ENCODE measurements at regions of chr15 and their contacts with region 1.

Region 1: GRCh38 chr15:29668120-29668602 is 154.1 kb downstream of the TJP1 start:
- DNase-seq: peak; percentile 18 to 85 (median 72)
- H3K4me3 ChIP-seq: no peak overlapping the region
- H3K27ac ChIP-seq: no peak overlapping the region
- H3K27me3 ChIP-seq: no peaks in the 10 kb centered on the region
- CTCF ChIP-seq: peak; percentile 74 to 99 (median 92)

Region 2: DNA sequence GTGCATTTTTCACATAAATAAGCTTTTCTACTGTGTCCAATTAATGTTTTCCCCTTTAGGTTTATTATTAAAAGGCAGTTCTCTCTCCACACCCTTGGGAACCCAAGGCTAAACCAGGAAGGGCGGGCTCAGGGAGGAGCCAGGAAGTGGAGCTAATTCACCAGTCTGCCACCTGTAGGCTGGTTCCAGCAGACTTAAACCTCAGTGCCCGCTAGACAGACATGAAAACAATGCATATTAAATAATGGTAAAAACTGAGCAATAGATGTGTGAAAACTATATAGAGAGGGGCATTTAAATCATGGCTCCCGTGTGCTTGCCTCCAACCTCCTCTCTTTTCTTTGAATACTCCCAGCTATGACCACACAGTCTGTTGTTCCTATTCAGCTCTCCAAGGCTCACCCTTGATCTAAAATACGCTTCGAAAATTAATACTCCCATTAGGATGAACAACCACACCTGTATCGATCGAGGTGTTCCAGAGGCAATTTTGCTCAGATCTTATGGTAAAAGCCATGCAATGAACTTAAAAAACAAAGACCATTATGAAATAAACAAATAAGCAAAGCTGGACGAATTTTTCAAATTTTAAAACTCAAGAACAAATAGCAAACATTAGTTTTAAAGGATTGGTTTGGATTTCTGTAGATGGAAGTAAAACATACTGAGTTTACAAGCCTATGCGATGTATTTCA is 99.2 kb before region 1 on chr15:
- intact Hi-C with region 1: loop called in 1 of 2 experiments (anchors 10 kb)
- DNase-seq: peak in 3 of 10 donors; percentile 14 to 54 (median 15)
- H3K4me3 ChIP-seq: peak overlapping the region in 52 of 59 donors; percentile 33 to 78 (median 66)
- H3K27ac ChIP-seq: no peak overlapping the region
- H3K27me3 ChIP-seq: peaks cover 0 to 5% (median 0%) of the 10 kb centered on the region in 45 donors
- CTCF ChIP-seq: peak in 16 of 56 donors; percentile 9 to 32 (median 20)

Region 3: GRCh38 chr15:29935276-29936020 is 267.3 kb after region 1 on chr15:
- intact Hi-C with region 1: loop called in 1 of 2 experiments (anchors 5 kb)
- DNase-seq: no peak
- H3K4me3 ChIP-seq: no peak overlapping the region
- H3K27ac ChIP-seq: peak overlapping the region in 44 of 59 donors; percentile 2 to 92 (median 56)
- H3K27me3 ChIP-seq: no peaks in the 10 kb centered on the region
- CTCF ChIP-seq: peak in 41 of 56 donors; percentile 8 to 64 (median 35)

Region 4: DNA sequence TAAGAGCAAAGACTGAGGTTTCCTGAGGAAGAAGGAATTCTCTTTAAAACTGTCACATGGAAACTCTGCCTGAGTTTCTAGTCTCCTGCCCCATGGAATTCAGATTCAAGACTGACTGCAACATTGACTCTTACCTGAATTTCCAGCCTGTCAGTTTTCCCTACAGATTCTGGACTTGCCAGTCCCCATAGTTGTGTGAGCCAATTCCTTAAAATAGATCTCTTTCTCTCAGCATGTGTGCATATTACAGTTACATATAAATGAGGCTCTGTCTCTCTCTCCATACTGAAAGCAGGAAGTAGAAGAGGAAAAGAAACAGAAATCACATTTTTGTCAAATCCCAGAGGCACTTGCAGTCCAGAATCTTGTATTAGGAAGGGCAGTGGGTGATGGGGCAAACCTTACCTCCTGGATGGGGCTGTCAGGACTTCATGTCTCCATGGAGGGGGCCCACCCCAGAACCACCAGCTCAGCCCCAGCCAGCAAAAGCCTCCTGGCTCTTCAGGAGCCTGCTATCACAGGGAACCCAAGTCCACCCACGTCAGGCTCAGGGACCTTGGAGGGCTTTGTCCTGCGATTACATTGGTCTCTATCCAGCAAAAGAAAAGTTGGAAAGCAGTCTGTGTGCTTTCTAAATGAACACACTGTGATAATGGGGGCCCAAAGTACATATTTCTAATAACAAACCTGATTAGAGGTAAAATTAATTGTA is 395.8 kb after region 1 on chr15:
- intact Hi-C with region 1: loop called in 1 of 2 experiments (anchors 5 kb)
- DNase-seq: no peak
- H3K4me3 ChIP-seq: no peak overlapping the region
- H3K27ac ChIP-seq: peak overlapping the region in 53 of 59 donors; percentile 5 to 95 (median 81)
- H3K27me3 ChIP-seq: no peaks in the 10 kb centered on the region
- CTCF ChIP-seq: no peak